GM13977 (cell line): ENCODE measurements at regions of chr14 and their contacts with region 1.

Region 1: GRCh38 chr14:101707068-101707842 is 54.3 kb upstream of the PPP2R5C start:
- DNase-seq: peak; percentile 82
- CTCF ChIP-seq: peak; percentile 77

Region 2: DNA sequence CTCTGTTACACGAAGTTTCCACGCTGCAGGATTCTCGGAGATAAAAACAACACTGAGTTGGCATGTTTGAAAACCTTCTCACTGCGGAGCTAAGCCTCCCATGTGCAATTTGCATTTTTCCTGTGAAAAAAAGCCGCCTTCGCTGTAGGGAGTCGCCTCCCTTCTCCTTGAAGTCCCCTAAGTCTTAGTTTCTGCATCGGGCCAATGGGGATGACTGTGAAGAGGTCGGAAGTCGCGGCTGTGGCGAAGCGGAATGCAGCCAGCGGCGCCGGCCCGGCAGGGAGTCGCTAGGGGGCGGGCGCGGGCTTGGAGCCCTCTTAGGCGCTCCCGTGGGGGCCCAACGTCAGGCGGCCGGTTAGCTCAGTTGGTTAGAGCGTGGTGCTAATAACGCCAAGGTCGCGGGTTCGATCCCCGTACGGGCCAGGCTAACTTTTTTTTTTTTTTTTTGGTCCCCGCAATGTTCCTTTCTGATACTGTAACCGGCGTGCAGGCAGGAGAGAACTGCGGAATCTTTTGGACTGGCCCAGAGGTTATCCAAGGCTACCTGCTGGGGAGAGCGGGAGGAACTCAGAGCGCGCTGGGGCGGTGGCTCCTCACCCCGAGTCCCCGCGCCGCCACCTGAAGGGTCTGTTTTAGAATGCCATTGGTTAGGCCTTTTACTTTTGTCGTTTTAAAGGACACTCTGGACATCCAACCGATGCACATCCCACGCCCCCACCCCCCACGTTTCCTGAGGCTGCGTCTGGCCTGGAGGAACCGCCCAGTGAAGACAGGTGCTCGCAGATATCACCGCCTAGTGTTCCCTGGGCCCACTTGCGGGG is 609.7 kb after region 1 on chr14:
- in situ Hi-C with region 1: loop called (anchors 25 kb)
- DNase-seq: peak; percentile 94
- CTCF ChIP-seq: peak; percentile 91